BJ (cell line): ENCODE measurements at regions of chr2 and their contacts with region 1.

Region 1: GRCh38 chr2:232365621-232366321 is 12.8 kb upstream of the ALPP start:
- DNase-seq: no peak
- H3K4me3 ChIP-seq: no peak overlapping the region
- H3K27me3 ChIP-seq: no peaks in the 10 kb centered on the region; the same call in 1 of the 2 replicates
- CTCF ChIP-seq: peak; percentile 59

Region 2: DNA sequence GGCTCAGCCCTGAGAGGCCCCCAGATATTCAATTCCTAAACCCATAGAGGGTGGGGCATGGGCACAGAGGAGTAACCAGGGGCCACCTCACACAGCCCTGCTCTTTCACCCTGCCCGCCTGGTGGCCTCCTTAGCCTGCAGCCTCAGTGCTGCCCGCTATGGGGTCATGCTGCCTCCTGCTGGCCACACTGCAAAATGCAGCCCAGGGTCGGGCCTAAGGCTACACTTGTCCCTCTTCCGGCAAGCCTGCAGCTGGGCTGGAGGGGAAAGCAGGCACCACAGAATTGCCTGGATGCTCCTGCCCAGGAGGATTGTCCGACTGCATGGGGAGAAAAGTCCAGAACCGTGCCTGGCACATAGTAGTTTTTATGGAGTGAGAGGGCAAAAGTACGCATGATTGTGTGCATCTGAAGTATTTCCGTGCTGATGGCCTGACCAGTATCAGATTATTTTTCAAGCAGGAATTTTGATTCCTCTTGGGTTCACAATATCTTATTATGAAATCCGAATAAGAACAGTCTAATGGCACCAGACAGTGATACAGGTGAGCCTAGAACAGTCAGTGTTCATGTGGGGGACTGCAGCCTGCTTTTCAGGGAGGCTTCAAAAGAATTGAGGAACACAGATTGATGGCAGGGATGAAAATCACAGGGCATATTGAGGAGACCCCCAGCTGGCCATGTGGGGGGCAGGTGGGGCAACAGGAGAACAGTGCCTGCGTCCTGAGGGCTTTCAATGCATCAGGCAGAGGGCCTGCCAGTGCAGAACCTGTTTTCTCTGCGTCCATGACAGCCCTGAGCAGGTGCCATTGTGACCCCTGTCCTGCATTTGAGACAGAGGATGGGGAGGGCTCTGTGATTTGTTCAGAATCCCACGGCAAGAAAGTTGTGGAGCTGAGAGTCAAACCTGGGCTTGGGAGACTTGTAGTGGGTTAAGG is 38.4 kb before region 1 on chr2:
- CTCF ChIA-PET with region 1: no interaction called
- POLR2A ChIA-PET with region 1: no interaction called
- DNase-seq: peak; percentile 0
- H3K4me3 ChIP-seq: no peak overlapping the region
- H3K27me3 ChIP-seq: no peaks in the 10 kb centered on the region
- CTCF ChIP-seq: peak; percentile 78

Region 3: GRCh38 chr2:232377801-232378734 is 12.3 kb after region 1 on chr2:
- CTCF ChIA-PET with region 1: interaction called, 13 read pairs
- POLR2A ChIA-PET with region 1: no interaction called
- DNase-seq: no peak
- H3K4me3 ChIP-seq: no peak overlapping the region
- H3K27me3 ChIP-seq: peaks cover 13% of the 10 kb centered on the region
- CTCF ChIP-seq: no peak

Region 4: DNA sequence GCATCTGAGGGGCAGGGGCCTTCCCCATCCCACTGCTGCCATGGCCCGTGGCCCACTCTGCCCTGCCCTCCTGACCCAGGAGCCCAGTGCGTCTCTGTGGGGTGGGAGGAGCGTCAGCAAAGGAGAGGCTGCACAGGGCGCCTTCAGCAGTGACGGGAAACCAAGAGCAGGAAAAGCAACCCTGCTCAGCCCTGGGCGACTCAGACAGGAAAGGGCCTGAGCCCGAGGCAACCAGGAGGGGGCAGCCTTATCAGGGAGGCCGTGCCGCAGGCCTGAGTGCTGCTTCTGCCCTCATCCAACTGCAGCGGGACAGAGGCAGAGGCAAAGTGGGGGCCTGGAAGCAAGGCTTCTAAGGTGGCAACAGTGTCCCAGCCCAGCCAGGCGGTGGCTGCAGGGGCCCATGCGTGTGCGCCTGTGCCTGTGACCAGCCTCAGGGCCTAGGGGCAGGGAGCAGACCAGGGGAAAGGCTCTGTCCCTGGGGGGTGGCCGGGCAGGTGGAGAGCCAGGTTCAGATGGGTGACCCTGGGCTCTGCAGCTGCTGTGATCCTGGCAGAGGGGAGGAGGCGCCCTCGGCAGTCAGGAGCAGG is 66.9 kb after region 1 on chr2:
- CTCF ChIA-PET with region 1: no interaction called
- POLR2A ChIA-PET with region 1: interaction called, 11 read pairs
- DNase-seq: no peak
- H3K4me3 ChIP-seq: no peak overlapping the region
- H3K27me3 ChIP-seq: no peaks in the 10 kb centered on the region; the same call in 1 of the 2 replicates
- CTCF ChIP-seq: peak; percentile 16; the same call in 1 of the 2 replicates

Region 5: GRCh38 chr2:232592772-232593395 is 227.1 kb after region 1 on chr2:
- CTCF ChIA-PET with region 1: no interaction called
- POLR2A ChIA-PET with region 1: no interaction called
- DNase-seq: peak; percentile 91
- H3K4me3 ChIP-seq: no peak overlapping the region
- H3K27me3 ChIP-seq: no peaks in the 10 kb centered on the region
- CTCF ChIP-seq: peak; percentile 31